Activated CD4-positive, alpha-beta T cell treated with anti-CD3 and anti-CD28 coated beads, Interleukin-2, amount 10 ng/mL, durations not matched to agents 24 days and 14 days (primary cell): ENCODE measurements at regions of chr10 and their contacts with region 1.

Region 1: DNA sequence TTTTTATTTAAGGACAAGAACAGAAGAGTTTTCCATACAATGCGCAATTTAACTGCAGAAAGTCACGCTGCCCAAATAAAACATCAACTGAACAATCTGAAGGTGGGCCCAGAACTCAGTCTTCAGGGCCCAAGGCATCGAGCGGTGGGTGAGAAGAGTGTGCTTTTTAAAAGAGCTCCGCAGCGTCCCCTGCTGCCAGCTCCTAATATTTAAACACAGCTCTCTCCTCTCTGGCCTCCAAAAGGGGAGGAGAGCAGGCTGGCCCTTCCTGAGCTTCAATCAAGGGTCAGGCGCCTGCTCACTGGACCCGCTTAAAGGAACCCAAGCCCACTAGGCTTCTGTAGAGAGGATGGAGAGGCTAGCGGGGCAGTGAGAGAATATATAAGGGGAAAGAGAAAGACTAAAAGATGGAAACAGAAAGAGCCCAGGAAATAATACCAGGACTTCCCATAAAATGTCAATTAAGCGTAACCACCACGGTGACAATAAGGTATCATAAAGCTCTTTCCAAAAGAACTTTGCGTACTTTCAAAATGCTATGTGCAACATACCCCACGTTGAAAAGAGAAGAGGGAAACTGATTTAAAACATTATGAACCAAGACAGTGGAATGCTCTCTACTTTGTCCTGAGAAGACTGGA is 2.8 kb downstream of the FAM53B start:
- DNase-seq: peak; percentile 92
- H3K4me3 Mint-ChIP-seq: peak overlapping the region; percentile 84
- H3K27ac Mint-ChIP-seq: peak overlapping the region; percentile 78
- H3K4me1 Mint-ChIP-seq: peaks cover 53% of the 10 kb centered on the region
- H3K27me3 Mint-ChIP-seq: peaks cover 10% of the 10 kb centered on the region

Region 2: GRCh38 chr10:124530215-124530665 is 211.2 kb before region 1 on chr10:
- intact Hi-C with region 1: loop called (anchors 1 kb)
- DNase-seq: peak; percentile 96
- H3K4me3 Mint-ChIP-seq: no peak overlapping the region
- H3K27ac Mint-ChIP-seq: no peak overlapping the region
- H3K4me1 Mint-ChIP-seq: peaks cover 5% of the 10 kb centered on the region
- H3K27me3 Mint-ChIP-seq: peaks cover 3% of the 10 kb centered on the region

Region 3: DNA sequence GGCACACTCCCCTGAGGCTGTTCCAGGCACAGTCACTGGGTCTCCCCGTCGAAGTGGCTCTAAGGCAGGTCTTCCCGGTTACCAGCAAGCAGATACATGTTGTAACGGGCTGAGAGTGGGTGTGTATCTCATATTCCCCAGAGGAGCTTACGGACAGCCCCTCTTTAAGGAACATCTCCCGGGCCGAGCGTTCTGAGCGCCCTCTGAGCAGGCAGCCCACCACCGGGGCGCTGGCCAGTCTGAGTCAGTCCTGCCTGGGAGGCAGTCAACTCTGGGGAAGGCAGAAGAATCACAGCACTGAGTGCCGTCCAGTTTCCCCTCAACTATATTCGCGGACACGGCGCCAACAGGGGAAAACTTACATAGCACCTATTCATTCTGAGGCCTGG is 162.4 kb before region 1 on chr10:
- intact Hi-C with region 1: no loop called
- DNase-seq: no peak
- H3K4me3 Mint-ChIP-seq: no peak overlapping the region
- H3K27ac Mint-ChIP-seq: no peak overlapping the region
- H3K4me1 Mint-ChIP-seq: no peaks in the 10 kb centered on the region
- H3K27me3 Mint-ChIP-seq: peaks cover 8% of the 10 kb centered on the region

Region 4: GRCh38 chr10:124614003-124614659 is 127.3 kb before region 1 on chr10:
- intact Hi-C with region 1: loop called (anchors 2 kb)
- DNase-seq: peak; percentile 79
- H3K4me3 Mint-ChIP-seq: no peak overlapping the region
- H3K27ac Mint-ChIP-seq: peak overlapping the region; percentile 25
- H3K4me1 Mint-ChIP-seq: peaks cover 32% of the 10 kb centered on the region
- H3K27me3 Mint-ChIP-seq: peaks cover 1% of the 10 kb centered on the region

Region 5: GRCh38 chr10:124688889-124689670 is 52.3 kb before region 1 on chr10:
- intact Hi-C with region 1: loop called (anchors 1 kb)
- DNase-seq: peak; percentile 86
- H3K4me3 Mint-ChIP-seq: peak overlapping the region; percentile 66
- H3K27ac Mint-ChIP-seq: peak overlapping the region; percentile 91
- H3K4me1 Mint-ChIP-seq: peaks cover 58% of the 10 kb centered on the region
- H3K27me3 Mint-ChIP-seq: no peaks in the 10 kb centered on the region

Region 6: GRCh38 chr10:124791378-124792348 is 50.3 kb after region 1 on chr10 and contains the start of gene EEF1AKMT2:
- intact Hi-C with region 1: loop called (anchors 2 kb)
- DNase-seq: peak; percentile 95
- H3K4me3 Mint-ChIP-seq: peak within 1 kb of the TSS; percentile 96
- H3K27ac Mint-ChIP-seq: peak within 1 kb of the TSS; percentile 97
- H3K4me1 Mint-ChIP-seq: peaks cover 17% of the 10 kb centered on the region
- H3K27me3 Mint-ChIP-seq: peaks cover 10% of the 10 kb centered on the region
- total RNA-seq, gene EEF1AKMT2: 21.5 and 22.3 TPM in 2 replicates

Region 7: DNA sequence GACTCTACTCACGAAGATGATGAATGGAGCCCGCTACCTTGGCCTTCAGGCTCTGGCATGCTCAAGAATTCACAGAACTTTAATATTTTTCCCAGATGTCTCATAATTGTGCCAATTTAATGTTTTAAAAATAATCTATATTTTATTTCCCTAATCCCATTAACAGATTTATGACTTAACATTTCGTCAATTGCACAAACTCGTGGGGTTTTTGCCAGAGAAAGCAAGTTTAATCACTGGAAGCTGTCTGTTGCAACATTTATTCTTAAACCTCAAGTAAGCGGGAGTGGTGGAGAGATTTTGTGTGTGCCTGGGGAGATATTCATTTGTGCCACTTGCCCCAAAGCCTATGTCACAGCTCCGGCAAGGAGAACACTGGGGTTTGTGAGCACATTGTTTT is 823.6 kb after region 1 on chr10:
- intact Hi-C with region 1: no loop called
- DNase-seq: no peak
- H3K4me3 Mint-ChIP-seq: no peak overlapping the region
- H3K27ac Mint-ChIP-seq: no peak overlapping the region
- H3K4me1 Mint-ChIP-seq: no peaks in the 10 kb centered on the region
- H3K27me3 Mint-ChIP-seq: peaks cover 2% of the 10 kb centered on the region